Activated CD8-positive, alpha-beta T cell treated with anti-CD3 and anti-CD28 coated beads for 36 hours (primary cell): ENCODE measurements at regions of chr18 and their contacts with region 1.

Region 1: GRCh38 chr18:69943021-69943420 is 4.7 kb downstream of the CD226 start:
- DNase-seq: peak; percentile 69
- ATAC-seq: peak; percentile 55
- H3K4me3 Mint-ChIP-seq: peak overlapping the region; percentile 84
- H3K27ac Mint-ChIP-seq: no peak overlapping the region
- H3K4me1 Mint-ChIP-seq: peaks cover 80% of the 10 kb centered on the region
- H3K27me3 Mint-ChIP-seq: no peaks in the 10 kb centered on the region
- CTCF ChIP-seq: peak; percentile 58

Region 2: DNA sequence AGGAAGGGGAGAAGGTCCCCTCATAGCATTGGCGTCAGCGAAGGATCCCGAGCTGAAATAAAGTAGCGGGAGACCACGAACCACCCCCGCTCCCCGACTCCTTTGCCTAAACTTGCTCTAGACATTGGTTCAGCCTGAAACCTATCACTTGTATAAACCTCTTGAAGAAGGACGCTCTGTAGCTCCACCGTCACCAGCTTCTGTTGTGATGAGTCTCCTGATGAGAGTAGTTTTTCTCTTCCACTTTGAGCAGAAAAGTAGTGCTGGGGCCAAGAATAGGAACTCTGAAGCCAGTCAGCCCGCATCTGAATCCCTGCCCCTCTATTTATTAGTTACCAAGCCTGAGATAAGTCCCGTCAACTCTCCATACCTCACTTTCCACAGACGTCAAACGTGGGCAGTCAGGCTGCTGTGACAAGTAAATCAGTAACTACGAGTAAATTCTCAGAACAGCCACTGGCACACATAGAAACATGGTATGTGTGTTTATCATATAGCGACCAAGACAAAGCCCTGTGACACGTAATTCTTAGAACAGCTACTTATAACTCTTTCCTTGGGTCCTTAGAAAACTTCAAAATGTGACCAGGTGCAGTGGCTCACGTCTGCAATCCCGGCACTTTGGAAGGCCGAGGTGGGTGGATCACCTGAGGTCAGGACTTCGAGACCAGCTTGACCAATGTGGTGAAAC is 57.0 kb before region 1 on chr18:
- CTCF ChIA-PET with region 1: no interaction called
- POLR2A ChIA-PET with region 1: interaction called, 11 read pairs
- intact Hi-C with region 1: loop called (anchors 2 kb)
- DNase-seq: peak; percentile 80
- ATAC-seq: peak; percentile 69
- H3K4me3 Mint-ChIP-seq: peak overlapping the region; percentile 59
- H3K27ac Mint-ChIP-seq: peak overlapping the region; percentile 95
- H3K4me1 Mint-ChIP-seq: peaks cover 70% of the 10 kb centered on the region
- H3K27me3 Mint-ChIP-seq: no peaks in the 10 kb centered on the region
- CTCF ChIP-seq: no peak

Region 3: DNA sequence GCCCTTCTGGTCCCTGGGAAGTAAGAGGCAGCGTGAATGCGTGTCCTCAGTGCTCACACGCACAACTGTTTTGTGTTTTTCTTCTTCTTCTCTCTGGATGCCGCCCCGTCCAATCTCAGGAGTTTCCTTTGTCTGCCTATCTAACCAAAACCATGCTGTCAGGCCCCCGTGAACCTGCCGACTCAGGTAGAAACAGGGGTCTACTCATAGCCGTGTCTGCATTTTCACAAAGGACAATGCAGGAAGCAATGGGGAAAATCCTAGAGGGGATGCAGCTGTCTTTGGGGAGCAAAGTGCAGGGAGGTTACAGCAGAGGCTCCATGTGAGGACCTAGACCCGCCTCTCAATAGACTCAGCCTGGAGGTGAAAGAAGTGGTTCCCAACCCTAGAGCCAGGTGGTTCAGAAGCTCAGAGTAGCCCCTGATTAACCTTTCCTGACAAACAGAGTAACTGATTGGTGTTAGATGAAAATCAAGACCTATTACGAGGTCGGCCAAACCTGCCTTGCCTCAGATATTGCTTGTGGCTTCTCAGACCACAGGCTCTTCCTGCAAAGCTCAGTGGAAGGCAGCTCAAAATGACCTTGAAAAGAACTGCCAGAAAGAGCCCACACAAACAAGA is 44.7 kb before region 1 on chr18:
- CTCF ChIA-PET with region 1: interaction called, 9 read pairs
- POLR2A ChIA-PET with region 1: interaction called, 19 read pairs
- intact Hi-C with region 1: no loop called
- DNase-seq: peak; percentile 55
- ATAC-seq: peak; percentile 32
- H3K4me3 Mint-ChIP-seq: peak overlapping the region; percentile 71
- H3K27ac Mint-ChIP-seq: peak overlapping the region; percentile 94
- H3K4me1 Mint-ChIP-seq: peaks cover 64% of the 10 kb centered on the region
- H3K27me3 Mint-ChIP-seq: no peaks in the 10 kb centered on the region
- CTCF ChIP-seq: no peak

Region 4: DNA sequence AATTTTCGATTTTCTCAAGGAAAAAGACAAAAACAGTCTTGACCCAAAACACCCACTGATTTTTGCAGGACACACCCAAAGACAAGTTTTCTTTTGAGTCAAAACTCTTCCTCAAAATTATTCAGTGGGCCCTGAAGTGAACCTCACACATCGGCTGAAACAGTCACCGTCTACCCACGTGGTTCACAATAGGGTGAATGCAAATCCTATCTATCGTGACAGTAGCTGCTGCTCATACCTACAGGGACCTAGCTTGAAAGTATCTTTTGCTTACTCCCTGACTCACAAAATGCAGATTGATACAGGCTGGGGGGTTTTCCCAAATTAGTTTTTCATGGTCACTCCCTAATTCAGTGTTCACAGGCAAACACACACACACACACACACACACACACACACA is 15.4 kb after region 1 on chr18:
- CTCF ChIA-PET with region 1: interaction called, 15 read pairs
- POLR2A ChIA-PET with region 1: interaction called, 33 read pairs
- intact Hi-C with region 1: no loop called
- DNase-seq: peak; percentile 61
- ATAC-seq: peak; percentile 84
- H3K4me3 Mint-ChIP-seq: no peak overlapping the region
- H3K27ac Mint-ChIP-seq: peak overlapping the region; percentile 40
- H3K4me1 Mint-ChIP-seq: peaks cover 7% of the 10 kb centered on the region
- H3K27me3 Mint-ChIP-seq: no peaks in the 10 kb centered on the region
- CTCF ChIP-seq: no peak

Region 5: DNA sequence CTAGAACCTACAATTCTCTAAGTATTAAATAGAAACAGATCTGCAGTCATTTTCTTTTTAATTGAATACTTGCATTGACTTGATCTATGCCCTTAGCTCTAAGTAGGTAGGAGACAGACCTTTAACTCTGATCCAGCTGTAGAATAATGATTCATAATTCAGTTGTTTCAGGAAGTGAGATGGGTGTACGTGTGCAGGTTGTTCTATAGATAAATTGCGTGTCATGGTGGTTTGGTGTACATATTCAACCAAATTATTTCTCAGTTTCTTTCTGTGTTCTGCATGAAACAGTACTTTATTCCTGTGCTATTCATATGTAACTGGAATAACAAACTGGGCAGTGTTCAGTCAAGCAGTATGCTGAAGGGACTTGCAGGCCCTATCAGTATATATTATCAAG is 38.9 kb after region 1 on chr18:
- CTCF ChIA-PET with region 1: interaction called, 3 read pairs
- POLR2A ChIA-PET with region 1: interaction called, 3 read pairs
- intact Hi-C with region 1: loop called (anchors 2 kb)
- DNase-seq: no peak
- ATAC-seq: peak; percentile 80
- H3K4me3 Mint-ChIP-seq: no peak overlapping the region
- H3K27ac Mint-ChIP-seq: peak overlapping the region; percentile 13
- H3K4me1 Mint-ChIP-seq: peaks cover 47% of the 10 kb centered on the region
- H3K27me3 Mint-ChIP-seq: no peaks in the 10 kb centered on the region
- CTCF ChIP-seq: no peak

Region 6: DNA sequence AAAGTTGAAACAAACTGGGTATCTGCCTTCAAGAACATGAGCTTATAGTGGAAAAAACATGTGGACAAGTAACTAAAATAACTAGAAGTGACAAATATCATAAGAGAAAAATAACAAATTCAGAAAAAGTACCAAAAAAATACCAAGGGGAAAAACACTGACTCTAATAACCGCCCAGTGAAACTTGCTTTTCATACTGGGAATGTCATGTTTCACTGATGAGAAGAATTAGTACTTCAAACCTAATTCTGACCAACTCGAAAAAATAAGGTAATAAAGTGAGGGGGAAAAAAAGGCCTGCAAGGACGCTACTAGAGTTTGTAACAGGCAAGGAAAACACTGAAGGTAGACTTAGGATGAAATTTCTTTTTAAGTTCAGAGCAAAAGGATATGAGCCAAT is 178.8 kb after region 1 on chr18:
- CTCF ChIA-PET with region 1: no interaction called
- POLR2A ChIA-PET with region 1: no interaction called
- intact Hi-C with region 1: no loop called
- DNase-seq: no peak
- ATAC-seq: no peak
- H3K4me3 Mint-ChIP-seq: no peak overlapping the region
- H3K27ac Mint-ChIP-seq: no peak overlapping the region
- H3K4me1 Mint-ChIP-seq: no peaks in the 10 kb centered on the region
- H3K27me3 Mint-ChIP-seq: no peaks in the 10 kb centered on the region
- CTCF ChIP-seq: no peak

Region 7: DNA sequence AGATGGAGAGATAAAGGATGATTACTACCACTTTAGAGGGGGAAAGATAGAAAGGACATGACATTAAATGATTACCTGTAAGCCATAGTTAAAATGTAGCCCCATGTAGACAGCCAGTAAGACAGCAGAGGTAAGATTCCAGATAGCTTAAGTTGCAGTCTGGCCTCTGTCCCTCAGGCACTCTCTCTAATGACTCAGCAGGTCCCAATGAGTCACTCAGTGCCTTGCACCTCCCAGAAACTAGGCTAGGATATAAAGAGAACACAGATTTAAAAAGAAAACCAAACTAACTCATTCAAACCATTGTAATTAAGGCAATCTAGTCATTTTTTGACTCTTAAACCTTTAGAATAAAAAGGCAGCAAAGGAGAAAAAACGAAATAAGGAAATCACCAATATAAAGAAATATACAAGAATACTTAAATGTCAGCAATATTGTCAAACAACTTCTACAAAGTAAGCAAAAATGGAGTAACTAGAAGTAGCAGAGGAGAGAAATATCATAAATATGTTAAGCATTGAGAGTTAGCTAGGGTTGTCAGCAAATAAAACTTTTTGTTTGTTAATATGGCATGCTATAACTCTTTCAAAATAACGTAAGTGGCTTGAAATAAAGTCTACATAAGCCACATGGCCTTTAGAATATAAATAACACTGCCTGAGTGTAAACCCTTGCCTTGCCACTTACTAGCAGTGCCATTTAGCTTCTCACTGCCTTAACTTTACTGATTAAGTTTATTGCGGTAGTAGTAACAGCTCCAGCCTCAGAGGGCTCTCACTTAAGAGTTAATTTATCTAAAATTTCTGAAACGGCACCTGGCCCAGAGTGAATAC is 394.3 kb after region 1 on chr18:
- CTCF ChIA-PET with region 1: no interaction called
- POLR2A ChIA-PET with region 1: no interaction called
- intact Hi-C with region 1: no loop called
- DNase-seq: no peak
- ATAC-seq: no peak
- H3K4me3 Mint-ChIP-seq: no peak overlapping the region
- H3K27ac Mint-ChIP-seq: no peak overlapping the region
- H3K4me1 Mint-ChIP-seq: no peaks in the 10 kb centered on the region
- H3K27me3 Mint-ChIP-seq: peaks cover 2% of the 10 kb centered on the region
- CTCF ChIP-seq: no peak